Activated naive CD4-positive, alpha-beta T cell treated with anti-CD3 and anti-CD28 coated beads for 36 hours (primary cell): ENCODE measurements at regions of chr12 and their contacts with region 1.

Region 1: DNA sequence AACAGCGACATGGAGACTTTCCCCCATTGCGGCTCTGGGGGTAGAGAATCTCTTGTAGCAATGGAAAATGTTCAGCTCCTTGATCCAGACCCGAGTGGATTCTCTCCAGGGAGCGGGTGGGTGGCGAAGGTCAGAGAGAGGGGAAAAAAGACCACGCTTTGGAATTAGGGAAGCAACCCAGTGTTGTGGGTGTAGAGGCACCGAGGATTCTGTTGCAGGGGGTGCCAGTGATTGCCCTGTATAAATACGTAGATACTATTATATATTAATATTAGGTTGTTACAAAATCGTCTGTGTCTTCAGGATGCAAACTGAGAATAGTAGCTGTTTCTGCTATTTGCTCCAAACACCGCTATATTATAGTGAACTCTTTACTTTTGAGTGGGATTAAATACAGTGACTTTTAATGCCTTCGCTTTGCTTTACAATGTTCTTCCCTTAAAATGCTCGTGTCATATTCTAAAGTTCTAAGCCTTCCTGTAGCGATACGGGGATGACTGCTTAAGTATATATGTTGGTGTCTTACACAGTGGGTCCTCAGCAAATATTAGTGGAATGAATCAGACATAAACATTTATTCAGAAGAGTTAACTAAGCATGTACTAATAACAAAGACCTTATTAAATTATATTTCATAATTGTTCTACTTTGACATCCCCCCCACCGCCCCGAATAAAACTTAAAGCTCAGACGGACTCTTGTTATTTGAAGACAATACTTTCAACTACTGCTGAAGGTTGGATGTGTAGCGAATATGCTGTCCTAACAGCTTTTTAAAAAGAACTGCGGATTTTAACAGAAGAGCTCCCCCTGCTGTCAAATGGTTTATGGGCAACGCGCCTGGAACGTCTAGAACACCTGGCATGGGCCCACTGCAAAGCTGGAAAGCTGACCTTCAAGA is 136.4 kb upstream of the KRAS start:
- DNase-seq: peak; percentile 87
- H3K4me3 Mint-ChIP-seq: peak overlapping the region; percentile 99
- H3K27ac Mint-ChIP-seq: peak overlapping the region; percentile 100
- H3K4me1 Mint-ChIP-seq: peaks cover 56% of the 10 kb centered on the region
- H3K27me3 Mint-ChIP-seq: no peaks in the 10 kb centered on the region

Region 2: GRCh38 chr12:25208554-25208953 is 178.5 kb before region 1 on chr12:
- CTCF ChIA-PET with region 1: no interaction called
- intact Hi-C with region 1: loop called (anchors 1 kb)
- DNase-seq: no peak
- H3K4me3 Mint-ChIP-seq: no peak overlapping the region
- H3K27ac Mint-ChIP-seq: peak overlapping the region; percentile 46
- H3K4me1 Mint-ChIP-seq: peaks cover 11% of the 10 kb centered on the region
- H3K27me3 Mint-ChIP-seq: no peaks in the 10 kb centered on the region

Region 3: DNA sequence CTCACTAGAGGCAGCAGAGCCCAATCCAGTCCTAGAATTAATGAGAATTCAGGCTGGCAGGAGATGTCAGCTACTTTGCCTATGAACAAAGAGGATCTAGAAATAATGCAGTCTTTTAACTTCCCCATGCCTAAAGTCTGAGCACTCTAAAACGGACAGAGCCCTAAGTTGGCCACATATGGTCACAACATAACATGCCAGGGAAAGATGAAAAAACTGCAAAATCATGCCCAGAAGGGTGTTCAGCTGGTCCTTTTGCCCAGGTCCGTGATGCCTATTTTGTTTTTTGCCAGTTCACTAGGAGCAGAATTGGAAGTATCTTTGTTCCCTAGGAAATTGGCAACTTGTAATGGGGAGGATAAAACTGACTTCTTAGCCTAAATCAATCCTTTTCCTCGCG is 186.3 kb after region 1 on chr12:
- CTCF ChIA-PET with region 1: no interaction called
- intact Hi-C with region 1: no loop called
- DNase-seq: no peak
- H3K4me3 Mint-ChIP-seq: no peak overlapping the region
- H3K27ac Mint-ChIP-seq: no peak overlapping the region
- H3K4me1 Mint-ChIP-seq: no peaks in the 10 kb centered on the region
- H3K27me3 Mint-ChIP-seq: no peaks in the 10 kb centered on the region

Region 4: GRCh38 chr12:25614813-25615518 is 227.9 kb after region 1 on chr12:
- CTCF ChIA-PET with region 1: no interaction called
- intact Hi-C with region 1: no loop called
- DNase-seq: no peak
- H3K4me3 Mint-ChIP-seq: no peak overlapping the region
- H3K27ac Mint-ChIP-seq: no peak overlapping the region
- H3K4me1 Mint-ChIP-seq: no peaks in the 10 kb centered on the region
- H3K27me3 Mint-ChIP-seq: no peaks in the 10 kb centered on the region